PC-9 (cell line): ENCODE measurements at regions of chr10 and their contacts with region 1.

Region 1: GRCh38 chr10:95246579-95247051 is 44.2 kb downstream of the PDLIM1 start:
- DNase-seq: peak; percentile 52 to 56
- H3K4me3 ChIP-seq: no peak overlapping the region
- H3K27ac ChIP-seq: peak overlapping the region; percentile 46; the same call in 1 of the 2 replicates
- H3K4me1 ChIP-seq: peaks cover 15% of the 10 kb centered on the region; the same call in 1 of the 2 replicates
- H3K27me3 ChIP-seq: no peaks in the 10 kb centered on the region
- CTCF ChIP-seq: peak; percentile 84

Region 2: GRCh38 chr10:93280699-93281366 is 1965.8 kb before region 1 on chr10:
- CTCF ChIA-PET with region 1: no interaction called
- POLR2A ChIA-PET with region 1: no interaction called
- intact Hi-C with region 1: no loop called
- DNase-seq: no peak
- H3K4me3 ChIP-seq: no peak overlapping the region
- H3K27ac ChIP-seq: no peak overlapping the region
- H3K4me1 ChIP-seq: no peaks in the 10 kb centered on the region
- H3K27me3 ChIP-seq: no peaks in the 10 kb centered on the region
- CTCF ChIP-seq: no peak

Region 3: DNA sequence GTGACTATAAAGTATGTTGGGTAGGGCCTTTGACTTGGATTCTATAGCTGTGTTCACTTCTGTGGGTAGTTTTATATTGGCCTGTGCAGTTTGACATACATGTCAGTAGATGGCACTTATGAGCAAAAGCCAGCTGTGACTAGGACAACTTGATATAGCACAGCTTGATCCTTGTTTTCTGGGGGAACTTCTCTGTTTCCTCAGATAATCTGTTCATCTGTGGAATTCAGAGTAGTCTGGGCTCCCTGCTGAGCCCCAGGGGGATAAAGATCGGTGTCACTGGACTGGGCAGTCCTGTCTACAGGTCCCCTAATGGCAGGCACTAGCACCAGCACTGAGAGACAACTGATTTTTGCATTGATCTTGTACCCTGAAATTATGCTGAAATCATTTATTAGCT is 282.7 kb before region 1 on chr10:
- CTCF ChIA-PET with region 1: no interaction called
- POLR2A ChIA-PET with region 1: no interaction called
- intact Hi-C with region 1: loop called (anchors 10 kb)
- DNase-seq: peak in 1 of 2 experiments; percentile 1
- H3K4me3 ChIP-seq: no peak overlapping the region
- H3K27ac ChIP-seq: no peak overlapping the region
- H3K4me1 ChIP-seq: no peaks in the 10 kb centered on the region
- H3K27me3 ChIP-seq: no peaks in the 10 kb centered on the region
- CTCF ChIP-seq: peak; percentile 61

Region 4: DNA sequence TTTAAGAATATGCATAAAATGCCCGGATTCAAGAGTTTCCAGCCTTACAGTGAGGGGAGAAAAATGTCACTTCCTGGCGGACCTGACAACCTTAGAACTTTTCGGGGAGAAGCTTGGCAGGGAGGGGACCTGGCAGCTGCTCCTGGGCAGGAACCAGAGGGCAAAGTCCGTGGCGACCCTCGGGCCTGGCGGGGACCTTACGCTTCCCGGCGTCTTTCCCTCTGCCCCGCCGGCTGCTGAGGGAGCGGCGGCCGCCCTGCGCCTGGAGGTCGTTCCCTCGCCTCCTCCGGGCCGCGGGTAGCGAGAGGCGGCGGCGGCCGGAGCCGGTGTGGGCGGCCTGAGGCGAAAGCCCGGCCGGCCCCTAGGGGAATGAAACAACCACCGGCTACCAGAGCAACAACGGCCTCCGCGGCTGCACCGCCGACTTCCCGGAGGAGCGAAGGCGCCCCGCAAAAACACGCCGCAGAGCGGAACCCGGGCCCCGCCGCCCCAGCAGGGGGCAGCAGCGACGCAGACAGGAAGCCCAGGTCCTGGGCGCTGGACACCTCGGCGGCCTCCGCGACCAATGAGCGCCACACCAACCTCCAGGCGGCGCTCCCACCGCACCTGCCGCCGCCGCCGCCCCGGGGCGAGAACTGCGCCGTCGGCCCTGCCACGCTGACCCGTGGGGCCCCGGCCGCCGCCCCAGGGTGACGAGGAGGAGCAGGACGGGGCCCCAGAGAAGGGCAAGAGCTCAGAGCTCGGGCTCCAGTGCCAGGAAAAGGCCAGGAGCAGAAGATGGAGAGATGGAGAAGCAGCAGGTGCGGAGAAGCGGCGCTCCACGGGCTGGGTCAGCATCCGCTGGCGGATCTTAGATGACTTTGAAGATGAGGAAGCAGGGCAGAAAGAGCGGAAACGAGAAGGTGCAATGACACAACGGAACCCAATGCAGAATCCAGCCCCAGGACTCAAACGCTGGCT is 63.1 kb before region 1 on chr10:
- CTCF ChIA-PET with region 1: interaction called, 3 read pairs
- POLR2A ChIA-PET with region 1: no interaction called
- intact Hi-C with region 1: loop called (anchors 1 kb)
- DNase-seq: peak in 1 of 2 experiments; percentile 78
- H3K4me3 ChIP-seq: peak overlapping the region; percentile 62
- H3K27ac ChIP-seq: 0 out of 2 replicates have a peak overlapping the region, but pooled peaks have one; percentile 26
- H3K4me1 ChIP-seq: no peaks in the 10 kb centered on the region
- H3K27me3 ChIP-seq: no peaks in the 10 kb centered on the region
- CTCF ChIP-seq: peak; percentile 87

Region 5: GRCh38 chr10:95208702-95209391 is 37.8 kb before region 1 on chr10:
- CTCF ChIA-PET with region 1: interaction called, 9 read pairs
- POLR2A ChIA-PET with region 1: no interaction called
- intact Hi-C with region 1: loop called (anchors 2 kb)
- DNase-seq: no peak
- H3K4me3 ChIP-seq: no peak overlapping the region
- H3K27ac ChIP-seq: no peak overlapping the region
- H3K4me1 ChIP-seq: peaks cover 11% of the 10 kb centered on the region
- H3K27me3 ChIP-seq: no peaks in the 10 kb centered on the region
- CTCF ChIP-seq: peak; percentile 59; the same call in 1 of the 2 replicates

Region 6: GRCh38 chr10:95290461-95291364 is 44.1 kb after region 1 on chr10 and contains the start of gene PDLIM1:
- CTCF ChIA-PET with region 1: no interaction called
- POLR2A ChIA-PET with region 1: no interaction called
- intact Hi-C with region 1: loop called (anchors 2 kb)
- DNase-seq: peak in 1 of 2 experiments; percentile 71
- H3K4me3 ChIP-seq: peak within 1 kb of the TSS; percentile 59
- H3K27ac ChIP-seq: peak within 1 kb of the TSS; percentile 23; the same call in 1 of the 2 replicates
- H3K4me1 ChIP-seq: peaks cover 31% of the 10 kb centered on the region
- H3K27me3 ChIP-seq: no peaks in the 10 kb centered on the region
- CTCF ChIP-seq: no peak
- total RNA-seq, gene PDLIM1: 202 and 215 TPM in 2 replicates

Region 7: DNA sequence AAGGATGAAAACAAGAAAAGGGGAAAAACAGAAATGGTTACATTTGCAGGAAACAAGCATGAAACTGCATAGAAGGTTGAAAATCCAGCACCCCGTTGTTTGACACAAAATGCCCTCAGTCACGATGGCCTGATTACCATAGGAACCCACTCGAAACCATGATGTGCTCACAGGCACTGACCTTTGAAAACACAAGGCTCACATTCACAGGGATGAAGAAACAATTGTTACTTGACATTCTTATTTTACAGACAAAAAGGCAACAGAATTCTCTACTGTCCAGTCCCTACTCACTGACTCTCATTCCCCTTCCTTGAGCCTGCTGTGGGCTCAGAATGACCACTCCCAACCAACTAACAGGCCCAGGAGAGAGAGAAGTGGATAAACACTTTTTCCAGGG is 175.6 kb after region 1 on chr10:
- CTCF ChIA-PET with region 1: no interaction called
- POLR2A ChIA-PET with region 1: no interaction called
- intact Hi-C with region 1: no loop called
- DNase-seq: no peak
- H3K4me3 ChIP-seq: no peak overlapping the region
- H3K27ac ChIP-seq: no peak overlapping the region
- H3K4me1 ChIP-seq: no peaks in the 10 kb centered on the region
- H3K27me3 ChIP-seq: no peaks in the 10 kb centered on the region
- CTCF ChIP-seq: no peak

Region 8: DNA sequence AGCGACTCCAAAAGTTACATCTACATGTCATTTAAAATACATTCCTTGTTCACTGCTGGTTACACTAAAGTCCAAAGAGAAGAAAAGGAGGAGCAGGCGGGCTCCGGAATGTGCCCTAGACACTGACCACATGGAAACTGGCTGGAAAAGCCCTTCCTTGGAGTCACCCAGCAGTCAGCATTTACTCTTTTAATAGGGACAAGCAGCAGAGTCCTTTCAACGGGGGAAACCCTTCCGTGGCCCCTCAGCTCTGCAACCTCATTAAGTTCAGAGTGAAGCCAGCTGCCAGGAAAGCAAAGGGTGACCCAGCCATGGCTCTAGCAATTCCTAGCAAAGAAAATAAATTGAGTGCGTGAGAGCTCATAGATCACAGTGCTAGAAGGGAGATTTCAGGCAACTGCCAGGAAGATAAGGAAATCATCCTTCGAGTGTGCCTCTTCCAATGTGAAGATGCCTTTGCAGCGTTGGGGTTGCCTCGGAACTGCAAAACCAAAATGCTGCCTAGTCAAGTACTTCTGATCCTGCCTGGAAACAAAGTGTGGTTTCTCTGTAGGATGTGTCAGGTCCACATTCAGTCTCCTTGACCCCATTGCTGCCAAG is 212.9 kb after region 1 on chr10:
- CTCF ChIA-PET with region 1: no interaction called
- POLR2A ChIA-PET with region 1: no interaction called
- intact Hi-C with region 1: no loop called
- DNase-seq: no peak
- H3K4me3 ChIP-seq: no peak overlapping the region
- H3K27ac ChIP-seq: no peak overlapping the region
- H3K4me1 ChIP-seq: no peaks in the 10 kb centered on the region
- H3K27me3 ChIP-seq: no peaks in the 10 kb centered on the region
- CTCF ChIP-seq: no peak